Sciatic nerve (tissue), 2 donors: ENCODE measurements at regions of chr18 and their contacts with region 1.

Region 1: GRCh38 chr18:23515911-23516546 is 12.7 kb downstream of the RMC1 start:
- DNase-seq: peak; percentile 86
- ATAC-seq: peak; percentile 93

Region 2: GRCh38 chr18:22052405-22053105 is 1463.5 kb before region 1 on chr18:
- intact Hi-C with region 1: no loop called
- DNase-seq: no peak
- ATAC-seq: no peak

Region 3: GRCh38 chr18:23529597-23529996 is 13.6 kb after region 1 on chr18:
- intact Hi-C with region 1: no loop called
- DNase-seq: no peak
- ATAC-seq: no peak

Region 4: DNA sequence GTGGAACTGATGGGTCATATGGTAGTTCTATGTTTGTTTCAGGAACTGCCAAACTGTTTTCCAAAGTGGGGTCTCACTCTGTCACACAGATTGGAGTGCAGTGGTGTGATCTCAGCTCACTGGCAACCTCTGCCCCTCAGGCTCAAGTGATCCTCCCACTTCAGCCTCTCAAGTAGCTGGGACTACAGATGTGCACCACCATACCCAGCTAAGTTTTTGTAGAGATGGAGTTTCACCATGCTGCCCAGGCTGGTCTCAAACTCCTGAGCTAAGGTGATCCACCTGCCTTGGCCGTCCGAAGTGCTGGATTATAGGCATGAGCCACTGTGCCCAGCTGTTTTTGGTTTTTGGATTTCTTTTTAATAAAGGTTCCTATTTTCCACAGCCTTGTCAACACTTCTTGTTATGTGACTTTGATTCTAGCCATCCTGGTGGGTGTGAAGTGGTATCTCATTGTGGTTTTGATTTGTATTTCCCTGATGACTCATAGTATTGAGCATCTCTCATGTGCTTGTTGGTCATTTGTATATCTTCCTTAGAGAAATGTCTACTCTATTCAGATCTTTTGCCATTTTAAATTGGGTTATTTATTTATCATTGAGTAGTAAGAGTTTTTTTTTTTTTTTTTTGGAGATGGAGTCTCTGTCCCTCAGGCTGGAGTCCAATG is 47.5 kb after region 1 on chr18:
- intact Hi-C with region 1: no loop called
- DNase-seq: no peak
- ATAC-seq: no peak

Region 5: GRCh38 chr18:23586249-23587196 is 70.5 kb after region 1 on chr18 and contains the start of gene NPC1:
- intact Hi-C with region 1: loop called (anchors 10 kb)
- DNase-seq: peak; percentile 96
- ATAC-seq: peak; percentile 99
- total RNA-seq, gene NPC1: 77.3 TPM

Region 6: DNA sequence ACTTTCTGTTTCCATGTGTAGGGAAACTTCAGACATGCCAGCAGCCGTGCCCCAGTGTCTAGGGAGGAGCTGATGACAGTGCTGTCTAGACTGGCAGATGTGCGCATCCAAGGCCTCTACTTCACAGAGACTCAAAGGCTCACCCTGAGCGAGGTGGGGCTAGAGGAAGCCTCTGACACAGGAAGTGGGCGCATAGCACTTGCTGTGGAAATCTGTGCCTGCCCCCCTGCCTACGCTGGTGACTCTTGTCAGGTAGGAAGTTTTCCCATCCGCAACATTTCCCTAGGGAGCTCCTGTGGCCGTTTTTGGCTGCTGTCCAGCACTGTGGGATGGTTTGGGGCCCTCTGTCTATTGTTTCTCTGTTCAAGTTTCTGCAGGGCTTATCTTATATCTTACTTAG is 355.4 kb after region 1 on chr18:
- intact Hi-C with region 1: no loop called
- DNase-seq: no peak
- ATAC-seq: peak; percentile 15